BJ (cell line): ENCODE measurements at regions of chr11 and their contacts with region 1.

Region 1: DNA sequence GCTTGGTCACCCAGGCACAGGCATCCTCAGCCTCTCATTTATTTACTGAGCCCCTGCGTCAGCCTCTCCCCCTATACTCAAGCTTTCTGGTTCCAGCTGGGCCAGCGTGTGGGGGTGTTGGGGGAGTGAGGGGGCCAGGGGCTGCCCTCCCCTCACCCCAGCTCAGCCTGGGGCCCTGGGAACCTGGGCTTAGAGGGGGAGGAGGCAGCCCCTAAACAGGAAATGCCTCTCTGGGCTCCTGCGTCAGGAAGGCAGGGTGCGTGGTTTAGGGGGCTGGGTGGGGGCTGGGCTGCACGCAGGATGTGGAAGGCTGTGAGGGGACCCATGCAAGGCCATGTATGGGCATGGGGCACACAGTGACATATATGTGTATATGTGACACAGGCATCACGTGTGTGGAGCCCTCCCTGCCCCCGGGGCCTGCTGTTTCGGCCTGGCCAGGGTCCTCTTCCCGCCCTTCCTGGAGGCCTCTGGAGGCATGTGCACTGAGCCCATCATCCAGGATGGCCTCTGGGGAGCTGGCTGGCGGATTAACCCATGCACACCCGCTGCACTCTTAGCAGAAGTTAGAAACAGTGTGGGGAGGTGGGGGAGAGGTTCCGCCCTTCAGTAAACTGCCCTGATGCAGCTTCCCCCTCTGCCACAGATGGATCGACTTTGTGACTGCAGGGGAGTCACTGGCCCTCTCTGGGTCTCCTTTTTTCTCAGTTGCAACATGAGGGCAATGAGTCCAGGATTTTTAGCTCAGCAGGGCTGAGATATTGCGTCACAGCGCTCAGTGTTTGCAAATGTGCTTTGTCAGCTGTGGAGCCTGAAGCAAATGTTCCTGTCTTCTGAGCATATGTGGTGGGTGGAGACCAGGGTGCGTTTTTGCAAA is 1.1 kb upstream of the CD248 start:
- DNase-seq: no peak
- H3K4me3 ChIP-seq: no peak overlapping the region
- H3K27me3 ChIP-seq: no peaks in the 10 kb centered on the region
- CTCF ChIP-seq: no peak

Region 2: GRCh38 chr11:66259956-66260355 is 58.0 kb before region 1 on chr11:
- CTCF ChIA-PET with region 1: no interaction called
- POLR2A ChIA-PET with region 1: no interaction called
- DNase-seq: no peak
- H3K4me3 ChIP-seq: no peak overlapping the region
- H3K27me3 ChIP-seq: no peaks in the 10 kb centered on the region
- CTCF ChIP-seq: no peak

Region 3: DNA sequence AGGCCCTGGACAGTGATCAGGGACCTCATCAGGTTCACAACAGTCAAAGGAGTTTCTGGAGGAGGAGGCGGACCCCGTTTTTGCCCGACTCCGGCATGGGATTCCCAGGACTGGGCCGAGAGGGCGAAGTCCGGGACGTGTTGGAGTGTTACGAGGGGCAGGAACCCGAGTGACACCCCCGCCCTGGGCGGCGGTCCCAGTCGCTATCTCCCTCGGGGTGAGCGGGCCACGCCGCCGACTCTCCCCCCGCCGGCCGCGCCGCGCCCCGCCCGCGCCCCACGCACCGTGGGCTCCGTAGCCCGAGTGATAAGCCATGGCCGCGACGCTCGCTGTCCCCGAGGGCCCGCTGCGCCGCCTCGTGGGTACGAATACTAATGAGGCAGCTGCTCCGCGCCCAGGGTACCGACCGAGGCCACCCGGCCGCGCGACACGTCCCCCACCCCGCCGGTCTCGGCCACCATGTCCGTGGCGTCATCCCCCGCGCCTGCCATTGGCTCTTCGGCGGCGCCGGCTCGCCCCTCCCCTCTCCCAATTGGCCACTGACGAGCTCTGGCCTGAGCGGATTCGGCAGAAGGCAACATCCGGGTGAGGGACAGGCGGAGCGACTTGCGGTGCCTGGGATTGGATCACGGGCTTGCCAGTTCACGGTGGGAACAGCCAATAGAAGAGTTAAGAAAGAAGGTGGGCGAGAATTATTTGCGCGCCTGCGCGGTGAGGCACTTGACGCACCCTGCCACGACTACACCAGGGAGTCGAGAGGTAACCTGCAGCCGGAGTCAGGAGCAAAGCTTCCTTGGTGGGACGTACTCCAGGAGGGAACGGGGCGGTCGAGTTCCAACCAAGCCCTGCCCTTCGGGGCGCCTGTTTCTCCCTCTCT is 29.1 kb before region 1 on chr11 and contains the start of gene YIF1A:
- CTCF ChIA-PET with region 1: interaction called, 34 read pairs
- POLR2A ChIA-PET with region 1: interaction called, 18 read pairs
- DNase-seq: peak; percentile 98
- H3K4me3 ChIP-seq: peak within 1 kb of the TSS; percentile 84
- H3K27me3 ChIP-seq: peaks cover 19% of the 10 kb centered on the region
- CTCF ChIP-seq: no peak
- polyA plus RNA-seq, gene YIF1A: 151 and 228 TPM in 2 replicates

Region 4: GRCh38 chr11:66299186-66299585 is 18.8 kb before region 1 on chr11:
- CTCF ChIA-PET with region 1: no interaction called
- POLR2A ChIA-PET with region 1: no interaction called
- DNase-seq: no peak
- H3K4me3 ChIP-seq: no peak overlapping the region
- H3K27me3 ChIP-seq: peaks cover 2% of the 10 kb centered on the region
- CTCF ChIP-seq: no peak

Region 5: GRCh38 chr11:66328307-66329144 is 10.6 kb after region 1 on chr11:
- CTCF ChIA-PET with region 1: interaction called, 201 read pairs
- POLR2A ChIA-PET with region 1: interaction called, 17 read pairs
- DNase-seq: no peak
- H3K4me3 ChIP-seq: no peak overlapping the region
- H3K27me3 ChIP-seq: no peaks in the 10 kb centered on the region
- CTCF ChIP-seq: peak; percentile 94

Region 6: GRCh38 chr11:66336234-66337102 is 18.5 kb after region 1 on chr11 and contains the start of gene RIN1:
- CTCF ChIA-PET with region 1: interaction called, 201 read pairs
- POLR2A ChIA-PET with region 1: interaction called, 34 read pairs
- DNase-seq: peak; percentile 93
- H3K4me3 ChIP-seq: peak within 1 kb of the TSS; percentile 78
- H3K27me3 ChIP-seq: no peaks in the 10 kb centered on the region
- CTCF ChIP-seq: peak; percentile 39
- polyA plus RNA-seq, gene RIN1: 6.3 and 9.2 TPM in 2 replicates

Region 7: DNA sequence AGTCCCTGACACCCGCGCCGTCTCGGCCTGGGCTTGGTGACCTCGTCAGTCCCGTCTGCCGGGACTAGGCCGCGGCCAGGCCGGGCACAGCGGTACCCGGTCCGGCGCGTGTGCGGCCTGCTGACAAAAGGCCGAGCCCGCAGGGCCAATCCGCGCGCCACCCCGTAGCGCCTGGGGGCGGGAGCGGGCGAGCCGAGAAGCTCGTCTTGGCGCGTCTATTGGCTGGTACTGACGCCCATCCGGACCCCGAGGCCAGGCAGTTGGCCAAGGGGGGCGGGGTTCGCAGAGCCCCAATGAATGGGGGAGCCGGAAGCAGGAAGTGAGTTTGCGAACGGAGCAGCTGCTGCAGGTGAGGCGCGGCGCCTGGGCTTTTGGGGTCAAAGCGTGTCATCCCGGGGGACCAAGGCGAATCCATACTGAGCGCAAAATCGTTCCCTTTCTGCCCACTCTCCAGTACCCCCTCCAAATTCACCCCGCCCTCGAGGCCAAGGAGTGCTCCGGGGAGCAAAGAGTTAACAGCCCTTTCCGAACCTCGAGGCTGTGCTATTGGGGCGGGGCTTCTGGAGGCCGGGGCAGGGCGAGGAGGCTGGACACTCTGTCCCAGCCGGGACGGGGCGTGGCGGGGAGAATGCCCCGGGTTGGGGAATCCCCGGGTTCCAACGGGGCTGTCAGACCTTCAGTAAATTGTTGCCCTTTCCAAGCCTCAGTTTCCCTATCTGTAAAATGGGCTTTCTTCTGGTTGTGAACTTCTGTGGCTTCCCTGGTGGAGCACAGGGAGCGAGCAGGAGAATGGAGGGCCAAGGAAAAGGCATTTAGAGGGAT is 162.4 kb after region 1 on chr11 and contains the start of gene DPP3:
- CTCF ChIA-PET with region 1: no interaction called
- POLR2A ChIA-PET with region 1: no interaction called
- DNase-seq: peak; percentile 77
- H3K4me3 ChIP-seq: peak within 1 kb of the TSS; percentile 69
- H3K27me3 ChIP-seq: no peaks in the 10 kb centered on the region
- CTCF ChIP-seq: no peak
- polyA plus RNA-seq, gene DPP3: 49.5 and 85.2 TPM in 2 replicates